ENCODE measurements at regions of chr4 and their contacts with region 1.

Region 1: DNA sequence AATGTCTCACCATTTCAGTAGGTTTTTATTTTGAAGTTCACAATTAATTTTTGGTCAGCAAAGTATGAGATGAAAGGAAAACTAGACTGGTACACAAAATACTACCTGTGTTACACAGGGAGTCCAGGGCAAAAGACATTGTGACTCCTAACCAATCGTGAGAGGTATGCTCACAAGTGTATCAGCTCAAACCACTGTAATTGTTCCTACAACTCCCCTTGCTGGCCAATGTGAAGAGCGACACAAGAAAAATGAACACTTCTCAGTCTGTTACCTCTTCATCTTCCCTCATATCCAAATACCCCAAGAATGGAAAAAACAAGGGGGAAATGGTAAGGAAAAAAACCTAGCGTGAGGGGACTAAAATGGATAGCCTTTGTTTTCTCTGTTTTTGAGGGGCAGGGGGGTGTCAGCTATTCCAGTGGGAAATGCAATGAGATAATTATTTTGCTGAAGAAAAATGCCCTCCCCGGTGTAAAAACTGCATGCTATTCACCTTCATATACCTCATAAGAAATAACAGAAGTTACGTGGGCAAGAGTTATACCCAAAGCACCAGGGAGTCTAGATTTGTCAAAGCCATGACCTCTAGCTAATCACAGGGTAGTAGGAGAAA is 30.6 kb upstream of the NSUN7 start:
- DNase-seq: no peak
- H3K4me3 Mint-ChIP-seq: no peak overlapping the region
- H3K27ac Mint-ChIP-seq: no peak overlapping the region
- H3K4me1 Mint-ChIP-seq: peaks cover 10% of the 10 kb centered on the region
- H3K27me3 Mint-ChIP-seq: peaks cover 2% of the 10 kb centered on the region

Region 2: GRCh38 chr4:40316782-40317635 is 402.1 kb before region 1 on chr4:
- CTCF ChIA-PET with region 1: no interaction called
- POLR2A ChIA-PET with region 1: no interaction called
- intact Hi-C with region 1: loop called (anchors 1 kb)
- DNase-seq: peak; percentile 77
- H3K4me3 Mint-ChIP-seq: peak overlapping the region; percentile 78
- H3K27ac Mint-ChIP-seq: peak overlapping the region; percentile 94
- H3K4me1 Mint-ChIP-seq: peaks cover 36% of the 10 kb centered on the region
- H3K27me3 Mint-ChIP-seq: no peaks in the 10 kb centered on the region

Region 3: DNA sequence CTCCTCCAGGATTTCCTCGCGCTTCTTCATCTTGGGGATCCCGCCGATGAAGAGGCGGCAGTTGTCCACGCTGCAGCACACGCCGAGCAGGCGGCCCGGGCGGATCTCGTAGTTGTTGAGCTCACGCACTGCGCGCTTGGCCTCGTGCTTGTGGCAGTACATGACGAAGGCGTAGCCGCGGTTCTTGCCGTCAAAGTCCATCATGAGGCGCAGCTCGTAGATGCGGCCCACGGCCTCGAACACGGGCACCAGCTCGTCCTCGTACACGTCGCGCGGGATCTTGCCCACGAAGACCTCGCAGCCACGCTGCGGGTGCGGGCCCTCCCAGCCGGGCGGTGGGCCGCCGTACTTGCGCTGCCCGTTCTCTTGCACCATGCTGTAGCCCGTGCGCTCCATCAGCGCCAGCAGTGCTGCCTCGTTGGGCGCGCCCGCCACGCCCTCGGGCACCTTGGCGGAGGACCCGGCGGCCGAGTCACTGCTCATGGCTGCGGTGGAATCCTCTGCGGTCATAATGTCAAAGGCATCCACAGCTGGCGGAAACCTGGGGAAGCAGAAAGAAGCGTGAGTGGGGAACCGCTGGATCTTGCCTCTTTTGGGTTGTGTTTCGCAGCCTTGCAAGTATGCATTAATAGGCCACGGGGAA is 280.6 kb before region 1 on chr4:
- CTCF ChIA-PET with region 1: no interaction called
- POLR2A ChIA-PET with region 1: no interaction called
- intact Hi-C with region 1: loop called (anchors 1 kb)
- DNase-seq: no peak
- H3K4me3 Mint-ChIP-seq: no peak overlapping the region
- H3K27ac Mint-ChIP-seq: no peak overlapping the region
- H3K4me1 Mint-ChIP-seq: peaks cover 15% of the 10 kb centered on the region
- H3K27me3 Mint-ChIP-seq: peaks cover 1% of the 10 kb centered on the region

Region 4: DNA sequence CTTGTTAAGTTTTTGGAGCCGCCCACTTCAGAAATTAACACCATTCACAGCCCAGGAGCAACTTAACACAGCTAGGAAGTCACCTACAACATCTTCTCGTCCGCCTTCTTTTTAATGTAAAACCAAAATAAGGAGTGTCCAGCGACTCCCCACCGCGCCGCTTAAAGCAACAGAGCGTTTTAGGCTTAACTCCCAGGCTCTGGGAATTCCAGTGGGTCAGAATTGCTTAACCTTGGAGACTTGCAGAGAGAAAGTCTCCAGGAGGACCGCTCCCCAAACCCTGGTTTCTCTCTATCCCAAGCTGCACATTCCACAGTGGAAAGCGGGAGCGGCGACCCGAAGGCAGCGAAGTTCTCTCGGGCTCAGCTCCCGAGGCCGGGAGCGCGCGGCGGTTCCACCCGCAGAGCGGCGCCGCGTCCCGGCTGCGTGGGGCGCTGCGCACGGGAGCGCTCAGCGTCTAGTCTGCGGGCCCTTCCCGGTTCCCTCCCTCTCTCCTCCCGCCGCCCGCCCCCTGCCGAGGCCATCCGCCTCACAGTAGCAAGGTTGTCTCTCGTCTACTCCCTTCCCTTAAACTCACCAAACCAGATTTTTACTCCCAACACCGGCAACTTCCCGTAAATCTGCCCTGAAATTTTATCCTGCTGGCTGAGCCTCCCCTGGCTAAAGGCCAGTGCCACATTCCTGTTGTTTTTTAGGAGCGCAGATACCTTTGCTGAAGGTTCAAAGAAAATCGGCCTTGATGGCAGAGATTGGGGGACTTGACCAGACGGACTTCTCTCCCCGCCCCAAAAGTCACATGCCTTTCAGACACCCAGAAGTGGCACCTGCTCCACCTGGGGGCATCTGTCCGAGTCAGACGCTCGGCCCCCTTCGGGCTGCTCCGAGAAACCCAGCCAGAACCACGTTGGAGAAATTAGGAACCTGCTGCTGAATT is 89.4 kb before region 1 on chr4 and contains the start of gene RBM47:
- CTCF ChIA-PET with region 1: no interaction called
- POLR2A ChIA-PET with region 1: no interaction called
- intact Hi-C with region 1: loop called (anchors 5 kb)
- DNase-seq: peak; percentile 44
- H3K4me3 Mint-ChIP-seq: peak within 1 kb of the TSS; percentile 70
- H3K27ac Mint-ChIP-seq: no peak within 1 kb of the TSS
- H3K4me1 Mint-ChIP-seq: peaks cover 28% of the 10 kb centered on the region
- H3K27me3 Mint-ChIP-seq: peaks cover 43% of the 10 kb centered on the region
- total RNA-seq, gene RBM47: 1.7 to 2.6 TPM

Region 5: GRCh38 chr4:40672536-40673526 is 46.3 kb before region 1 on chr4:
- CTCF ChIA-PET with region 1: interaction called, 5 read pairs
- POLR2A ChIA-PET with region 1: interaction called, 4 read pairs
- intact Hi-C with region 1: loop called (anchors 1 kb)
- DNase-seq: peak; percentile 71
- H3K4me3 Mint-ChIP-seq: peak overlapping the region; percentile 63
- H3K27ac Mint-ChIP-seq: peak overlapping the region; percentile 92
- H3K4me1 Mint-ChIP-seq: peaks cover 50% of the 10 kb centered on the region
- H3K27me3 Mint-ChIP-seq: no peaks in the 10 kb centered on the region

Region 6: DNA sequence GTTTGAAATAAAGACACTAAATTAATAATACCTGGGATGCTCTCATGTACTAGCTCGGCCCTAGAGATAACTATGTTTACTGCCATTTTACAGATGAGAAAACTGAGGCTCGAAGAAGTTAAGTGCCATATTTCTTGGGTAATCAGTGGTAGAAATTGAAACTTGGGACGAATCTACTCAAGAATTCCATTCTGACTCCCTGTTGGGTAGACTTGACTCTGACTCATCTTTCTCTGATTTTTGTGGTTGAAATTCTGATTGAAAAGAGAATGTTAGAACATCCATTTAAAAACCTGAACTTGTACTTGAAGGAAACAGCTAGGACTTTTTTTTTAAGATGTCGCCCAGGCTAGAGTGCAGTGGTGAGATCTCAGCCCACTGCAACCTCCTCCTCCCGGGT is 19.5 kb before region 1 on chr4:
- CTCF ChIA-PET with region 1: interaction called, 3 read pairs
- POLR2A ChIA-PET with region 1: interaction called, 3 read pairs
- intact Hi-C with region 1: loop called (anchors 1 kb)
- DNase-seq: peak; percentile 21
- H3K4me3 Mint-ChIP-seq: no peak overlapping the region
- H3K27ac Mint-ChIP-seq: peak overlapping the region; percentile 38
- H3K4me1 Mint-ChIP-seq: peaks cover 31% of the 10 kb centered on the region
- H3K27me3 Mint-ChIP-seq: no peaks in the 10 kb centered on the region

Region 7: GRCh38 chr4:40908702-40909362 is 189.7 kb after region 1 on chr4:
- CTCF ChIA-PET with region 1: no interaction called
- POLR2A ChIA-PET with region 1: no interaction called
- intact Hi-C with region 1: loop called (anchors 5 kb)
- DNase-seq: peak; percentile 86
- H3K4me3 Mint-ChIP-seq: no peak overlapping the region
- H3K27ac Mint-ChIP-seq: peak overlapping the region; percentile 83
- H3K4me1 Mint-ChIP-seq: peaks cover 23% of the 10 kb centered on the region
- H3K27me3 Mint-ChIP-seq: no peaks in the 10 kb centered on the region